ENCODE measurements at regions of chr15 and their contacts with region 1.

Region 1: DNA sequence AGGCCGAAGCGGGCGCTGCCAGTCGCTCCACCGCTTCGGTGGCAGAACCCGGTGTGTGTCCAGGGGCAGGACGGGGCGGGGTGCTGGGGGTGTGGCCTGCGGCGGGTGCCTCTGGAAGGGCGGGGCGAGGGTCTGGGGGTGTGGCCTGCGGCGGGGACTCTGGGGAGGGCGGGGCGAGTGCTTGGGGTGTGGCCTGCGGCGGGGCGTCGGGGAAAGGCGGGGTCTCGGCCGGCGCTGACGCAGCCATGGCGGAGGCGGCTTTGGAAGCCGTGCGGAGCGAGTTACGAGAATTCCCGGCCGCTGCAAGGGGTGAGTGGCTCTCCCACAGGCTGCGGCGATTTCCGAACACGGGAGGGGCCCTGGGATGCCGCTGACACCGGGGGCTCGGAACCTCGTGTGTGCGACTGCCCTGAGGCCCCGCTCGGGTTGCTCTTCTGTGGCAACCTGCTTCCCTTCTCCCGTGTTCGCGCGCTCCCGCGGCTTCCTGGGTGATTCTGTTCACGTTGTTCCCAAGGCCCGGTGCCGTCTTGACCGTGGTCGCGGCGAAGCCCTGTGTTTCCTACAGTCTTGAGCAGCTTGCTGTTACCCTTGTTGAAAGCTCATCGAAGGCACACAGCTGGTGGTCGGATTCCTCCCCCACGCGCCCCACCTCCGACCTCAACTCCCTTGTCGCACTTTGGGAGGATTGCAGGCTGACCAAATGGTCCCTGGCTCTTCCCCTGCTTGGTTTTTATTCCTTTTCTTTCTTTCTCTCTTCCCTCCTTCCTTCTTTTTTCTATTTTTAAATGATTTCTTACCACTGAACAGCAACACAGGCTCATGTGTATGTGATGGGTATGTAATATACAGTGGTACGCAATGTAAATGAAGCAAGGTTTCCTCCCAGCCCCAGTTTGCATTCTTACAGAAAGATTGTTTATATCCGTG is at the start of gene JMJD7:
- DNase-seq: peak; percentile 97 to 99
- ATAC-seq: peak; percentile 97
- H3K4me3 ChIP-seq: peak within 1 kb of the TSS; percentile 42 to 53
- H3K27ac ChIP-seq: peak within 1 kb of the TSS in 1 of 2 donors; percentile 39
- H3K4me1 ChIP-seq: no peaks in the 10 kb centered on the region
- H3K27me3 ChIP-seq: no peaks in the 10 kb centered on the region
- total RNA-seq, gene JMJD7: 9.6 to 12.6 TPM

Region 2: GRCh38 chr15:41597787-41598186 is 230.4 kb before region 1 on chr15:
- intact Hi-C with region 1: no loop called
- DNase-seq: no peak
- ATAC-seq: no peak
- H3K4me3 ChIP-seq: no peak overlapping the region
- H3K27ac ChIP-seq: no peak overlapping the region
- H3K4me1 ChIP-seq: no peaks in the 10 kb centered on the region
- H3K27me3 ChIP-seq: no peaks in the 10 kb centered on the region

Region 3: GRCh38 chr15:41881920-41882688 is 54.0 kb after region 1 on chr15:
- intact Hi-C with region 1: no loop called
- DNase-seq: no peak
- ATAC-seq: no peak
- H3K4me3 ChIP-seq: no peak overlapping the region
- H3K27ac ChIP-seq: no peak overlapping the region
- H3K4me1 ChIP-seq: no peaks in the 10 kb centered on the region
- H3K27me3 ChIP-seq: no peaks in the 10 kb centered on the region

Region 4: GRCh38 chr15:41894791-41895463 is 66.8 kb after region 1 on chr15:
- intact Hi-C with region 1: loop called in 1 of 2 experiments (anchors 5 kb)
- DNase-seq: peak; percentile 91 to 92
- ATAC-seq: peak; percentile 88
- H3K4me3 ChIP-seq: no peak overlapping the region
- H3K27ac ChIP-seq: peak overlapping the region in 1 of 2 donors; percentile 38
- H3K4me1 ChIP-seq: no peaks in the 10 kb centered on the region
- H3K27me3 ChIP-seq: no peaks in the 10 kb centered on the region

Region 5: DNA sequence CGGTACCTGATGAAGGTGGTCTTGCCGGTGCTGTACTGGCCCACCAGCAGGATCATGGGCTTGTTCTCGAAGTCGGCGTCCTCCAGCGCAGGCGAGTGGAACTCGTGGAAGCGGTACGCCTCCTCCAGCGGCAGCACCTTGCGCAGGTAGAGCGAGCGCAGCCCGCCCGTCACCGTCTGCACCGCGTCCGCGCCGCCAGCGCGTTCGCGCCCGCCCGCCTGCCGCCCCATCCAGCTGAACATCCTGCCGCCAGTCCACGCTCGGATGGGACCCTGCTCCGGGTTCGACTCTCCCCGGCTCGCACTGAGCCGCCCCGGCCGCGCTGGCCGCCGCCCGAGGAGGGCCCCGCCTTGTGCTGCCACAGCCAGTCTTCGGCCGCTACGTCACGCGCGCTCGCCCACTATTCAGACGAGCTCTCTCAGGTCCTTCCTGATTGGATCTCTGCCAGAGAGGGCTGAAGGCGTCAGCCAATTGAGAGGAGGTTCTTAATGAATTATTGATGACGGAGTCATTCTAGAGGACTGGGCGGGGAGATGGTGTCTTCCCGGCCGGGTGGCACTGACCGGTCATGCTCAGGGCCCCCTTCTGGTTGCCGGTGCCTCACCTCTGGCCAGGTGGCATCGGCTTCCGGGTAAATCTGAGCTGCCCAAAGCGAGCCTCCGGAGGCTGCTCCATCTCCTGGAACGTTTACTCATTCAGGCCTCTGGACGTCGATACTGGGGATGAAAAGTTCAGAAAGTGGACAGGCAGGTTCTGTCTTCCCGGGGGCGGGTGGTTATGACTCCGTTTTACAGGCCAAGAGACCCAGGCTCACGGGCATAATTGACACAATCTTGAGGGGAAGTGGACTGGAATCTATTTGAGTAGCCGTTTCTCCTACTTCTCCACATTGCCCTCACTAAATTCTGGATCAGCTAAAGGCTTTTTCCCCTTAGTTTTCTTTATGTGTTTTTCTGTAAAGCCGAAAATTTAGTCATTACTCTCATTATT is 144.4 kb after region 1 on chr15 and contains the start of gene EHD4:
- intact Hi-C with region 1: loop called in 1 of 2 experiments (anchors 10 kb)
- DNase-seq: peak; percentile 99 to 100
- ATAC-seq: peak; percentile 97
- H3K4me3 ChIP-seq: peak within 1 kb of the TSS; percentile 57 to 89
- H3K27ac ChIP-seq: peak within 1 kb of the TSS; percentile 68 to 69
- H3K4me1 ChIP-seq: peaks cover 0 to 7% of the 10 kb centered on the region in 2 donors
- H3K27me3 ChIP-seq: no peaks in the 10 kb centered on the region
- total RNA-seq, gene EHD4: 47.3 to 56.6 TPM

Measured in aorta (tissue), 5 donors.